ENCODE measurements at regions of chr1 and their contacts with region 1.

Region 1: GRCh38 chr1:27044613-27045151 is 32.0 kb upstream of the TENT5B start:
- DNase-seq: peak; percentile 85 to 91
- H3K4me3 ChIP-seq: no peak overlapping the region
- H3K27ac ChIP-seq: no peak overlapping the region
- H3K4me1 ChIP-seq: peaks cover 0 to 6% of the 10 kb centered on the region in 2 donors
- H3K27me3 ChIP-seq: no peaks in the 10 kb centered on the region
- CTCF ChIP-seq: peak; percentile 94 to 99 (median 97)
- POLR2A ChIP-seq: no peak

Region 2: GRCh38 chr1:26999440-26999987 is 45.2 kb before region 1 on chr1:
- intact Hi-C with region 1: loop called (anchors 5 kb)
- DNase-seq: peak; percentile 80 to 83
- H3K4me3 ChIP-seq: no peak overlapping the region
- H3K27ac ChIP-seq: peak overlapping the region; percentile 33 to 75 (median 68)
- H3K4me1 ChIP-seq: peaks cover 31 to 49% of the 10 kb centered on the region in 2 donors
- H3K27me3 ChIP-seq: no peaks in the 10 kb centered on the region
- CTCF ChIP-seq: no peak
- POLR2A ChIP-seq: peak in 1 of 2 donors; percentile 26

Region 3: DNA sequence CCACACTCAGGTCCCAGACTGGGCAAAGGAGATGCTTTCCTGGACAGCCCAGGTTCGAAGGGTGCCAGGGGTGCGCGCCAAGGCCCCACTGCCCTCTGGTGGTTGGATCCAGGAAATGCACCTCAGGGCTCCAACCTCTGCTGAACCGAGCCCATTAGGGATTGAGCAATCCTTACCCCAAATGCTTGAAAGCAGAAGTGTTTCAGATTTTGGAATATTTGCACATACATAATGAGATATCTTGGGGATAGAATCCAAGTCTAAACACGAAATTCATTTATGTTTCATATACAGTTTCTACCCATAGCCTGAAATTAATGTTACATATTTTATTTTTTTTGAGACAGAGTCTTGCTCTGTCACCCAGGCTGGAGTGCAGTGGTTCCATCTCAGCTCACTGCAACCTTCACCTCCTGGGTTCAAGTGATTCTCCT is 52.8 kb after region 1 on chr1:
- intact Hi-C with region 1: loop called (anchors 2 kb)
- DNase-seq: peak; percentile 73 to 77
- H3K4me3 ChIP-seq: no peak overlapping the region
- H3K27ac ChIP-seq: no peak overlapping the region
- H3K4me1 ChIP-seq: peaks cover 5 to 21% of the 10 kb centered on the region in 2 donors
- H3K27me3 ChIP-seq: no peaks in the 10 kb centered on the region
- CTCF ChIP-seq: peak; percentile 86 to 98 (median 94)
- POLR2A ChIP-seq: no peak

Region 4: DNA sequence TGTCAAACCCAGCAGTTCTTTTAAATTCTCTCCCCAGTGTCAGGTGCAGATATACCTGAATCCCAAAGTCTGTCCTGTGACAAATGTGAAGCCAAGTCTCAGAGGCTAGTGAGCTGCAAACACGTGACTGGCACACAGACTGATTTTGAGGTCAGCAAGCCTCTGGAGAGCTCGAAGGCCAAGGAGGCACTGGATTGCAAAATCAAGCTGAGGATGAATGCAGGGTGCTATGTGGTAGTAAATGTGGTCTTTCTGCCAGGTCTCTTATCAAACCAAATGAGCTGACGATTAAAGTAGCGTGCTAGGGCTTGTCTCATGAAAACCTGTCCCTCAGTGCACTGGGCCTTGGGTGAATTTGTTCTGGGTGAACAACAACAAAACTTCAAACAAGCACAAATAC is 368.3 kb after region 1 on chr1:
- intact Hi-C with region 1: no loop called
- DNase-seq: peak; percentile 70 to 77
- H3K4me3 ChIP-seq: no peak overlapping the region
- H3K27ac ChIP-seq: peak overlapping the region; percentile 28 to 85 (median 68)
- H3K4me1 ChIP-seq: peaks cover 51% of the 10 kb centered on the region in 2 donors
- H3K27me3 ChIP-seq: no peaks in the 10 kb centered on the region
- CTCF ChIP-seq: no peak
- POLR2A ChIP-seq: no peak